CD4-positive, alpha-beta T cell (primary cell): ENCODE measurements at regions of chr12 and their contacts with region 1.

Region 1: GRCh38 chr12:48988030-48988649 is 10.0 kb downstream of the WNT1 start:
- DNase-seq: peak; percentile 50 to 85 (median 68)
- ATAC-seq: peak; percentile 76
- H3K4me3 ChIP-seq: no peak overlapping the region
- H3K4me3 Mint-ChIP-seq: no peak overlapping the region
- H3K27ac ChIP-seq: no peak overlapping the region
- H3K27ac Mint-ChIP-seq: no peak overlapping the region
- H3K4me1 ChIP-seq: peaks cover 7% of the 10 kb centered on the region
- H3K4me1 Mint-ChIP-seq: peaks cover 6% of the 10 kb centered on the region
- H3K27me3 ChIP-seq: peaks cover 0 to 23% of the 10 kb centered on the region in 2 experiments
- H3K27me3 Mint-ChIP-seq: peaks cover 50% of the 10 kb centered on the region
- CTCF ChIP-seq: peak; percentile 81

Region 2: GRCh38 chr12:48924617-48925303 is 63.4 kb before region 1 on chr12:
- CTCF ChIA-PET with region 1: interaction called, 19 read pairs
- POLR2A ChIA-PET with region 1: interaction called, 9 read pairs
- intact Hi-C with region 1: no loop called
- DNase-seq: peak; percentile 60 to 91 (median 74)
- ATAC-seq: peak; percentile 84
- H3K4me3 ChIP-seq: peak overlapping the region; percentile 100
- H3K4me3 Mint-ChIP-seq: peak overlapping the region; percentile 99
- H3K27ac ChIP-seq: peak overlapping the region; percentile 87 to 91
- H3K27ac Mint-ChIP-seq: peak overlapping the region; percentile 86
- H3K4me1 ChIP-seq: peaks cover 52% of the 10 kb centered on the region
- H3K4me1 Mint-ChIP-seq: peaks cover 63% of the 10 kb centered on the region
- H3K27me3 ChIP-seq: no peaks in the 10 kb centered on the region
- H3K27me3 Mint-ChIP-seq: no peaks in the 10 kb centered on the region
- CTCF ChIP-seq: peak; percentile 75

Region 3: GRCh38 chr12:48969833-48970701 is 18.1 kb before region 1 on chr12:
- CTCF ChIA-PET with region 1: interaction called, 62 read pairs
- POLR2A ChIA-PET with region 1: interaction called, 3 read pairs
- intact Hi-C with region 1: no loop called
- DNase-seq: peak in 7 of 14 experiments; percentile 14 to 79 (median 50)
- ATAC-seq: peak; percentile 77
- H3K4me3 ChIP-seq: peak overlapping the region; percentile 32
- H3K4me3 Mint-ChIP-seq: peak overlapping the region; percentile 69
- H3K27ac ChIP-seq: no peak overlapping the region
- H3K27ac Mint-ChIP-seq: no peak overlapping the region
- H3K4me1 ChIP-seq: peaks cover 47% of the 10 kb centered on the region
- H3K4me1 Mint-ChIP-seq: peaks cover 23% of the 10 kb centered on the region
- H3K27me3 ChIP-seq: peaks cover 45 to 49% of the 10 kb centered on the region in 2 experiments
- H3K27me3 Mint-ChIP-seq: peaks cover 49% of the 10 kb centered on the region
- CTCF ChIP-seq: no peak

Region 4: GRCh38 chr12:49013428-49013827 is 25.3 kb after region 1 on chr12:
- CTCF ChIA-PET with region 1: interaction called, 16 read pairs
- POLR2A ChIA-PET with region 1: no interaction called
- intact Hi-C with region 1: no loop called
- DNase-seq: no peak
- ATAC-seq: no peak
- H3K4me3 ChIP-seq: no peak overlapping the region
- H3K4me3 Mint-ChIP-seq: no peak overlapping the region
- H3K27ac ChIP-seq: no peak overlapping the region
- H3K27ac Mint-ChIP-seq: no peak overlapping the region
- H3K4me1 ChIP-seq: peaks cover 14% of the 10 kb centered on the region
- H3K4me1 Mint-ChIP-seq: peaks cover 37% of the 10 kb centered on the region
- H3K27me3 ChIP-seq: no peaks in the 10 kb centered on the region
- H3K27me3 Mint-ChIP-seq: no peaks in the 10 kb centered on the region
- CTCF ChIP-seq: no peak